ENCODE measurements at regions of chr6 and their contacts with region 1.

Region 1: DNA sequence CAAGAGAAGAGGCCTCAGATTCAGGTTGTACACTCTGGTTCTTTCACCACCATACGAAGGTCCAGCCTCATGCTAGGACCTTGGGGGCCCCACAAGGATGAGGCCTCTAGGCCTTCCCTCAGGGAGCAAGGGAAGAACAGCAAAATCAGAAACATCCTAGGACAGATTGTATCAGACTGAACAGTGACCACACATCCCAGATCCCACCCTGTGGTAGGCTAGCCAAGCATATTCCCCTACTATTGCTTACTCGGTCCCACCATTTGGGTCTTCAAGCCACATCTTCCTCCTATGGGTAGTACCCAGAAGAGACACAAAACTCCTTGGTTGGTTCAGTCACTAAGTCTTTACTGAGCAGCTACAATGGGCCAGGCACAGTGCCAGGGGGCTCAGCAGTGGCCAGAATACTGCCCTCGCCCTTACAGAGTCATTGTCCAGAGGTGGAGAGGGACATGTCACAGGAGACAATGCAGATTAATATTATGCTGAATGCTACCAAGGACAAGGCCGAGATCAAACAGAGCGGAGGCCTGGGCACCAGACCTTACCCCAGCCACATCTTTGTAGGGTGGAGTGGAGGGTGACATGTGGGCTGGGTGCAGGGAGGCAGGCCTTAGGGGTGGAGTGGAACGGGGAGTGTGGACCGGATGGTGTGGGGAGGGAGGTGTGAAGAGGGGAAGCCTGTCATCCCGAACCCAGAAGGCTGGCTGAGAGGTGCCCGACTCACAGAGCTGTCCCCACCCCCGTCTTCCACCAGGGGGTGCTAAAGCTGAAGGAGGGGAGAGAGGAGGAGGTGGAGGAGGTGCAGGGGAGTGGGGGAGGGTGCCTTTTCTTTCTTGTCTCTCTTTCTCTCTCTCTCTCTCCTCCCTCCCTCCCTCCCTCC is 6.8 kb upstream of the MAPK13 start:
- DNase-seq: peak; percentile 64
- H3K4me3 ChIP-seq: no peak overlapping the region
- H3K27ac ChIP-seq: no peak overlapping the region
- H3K4me1 ChIP-seq: peaks cover 15% of the 10 kb centered on the region
- H3K27me3 ChIP-seq: no peaks in the 10 kb centered on the region
- CTCF ChIP-seq: peak; percentile 68 to 87

Region 2: DNA sequence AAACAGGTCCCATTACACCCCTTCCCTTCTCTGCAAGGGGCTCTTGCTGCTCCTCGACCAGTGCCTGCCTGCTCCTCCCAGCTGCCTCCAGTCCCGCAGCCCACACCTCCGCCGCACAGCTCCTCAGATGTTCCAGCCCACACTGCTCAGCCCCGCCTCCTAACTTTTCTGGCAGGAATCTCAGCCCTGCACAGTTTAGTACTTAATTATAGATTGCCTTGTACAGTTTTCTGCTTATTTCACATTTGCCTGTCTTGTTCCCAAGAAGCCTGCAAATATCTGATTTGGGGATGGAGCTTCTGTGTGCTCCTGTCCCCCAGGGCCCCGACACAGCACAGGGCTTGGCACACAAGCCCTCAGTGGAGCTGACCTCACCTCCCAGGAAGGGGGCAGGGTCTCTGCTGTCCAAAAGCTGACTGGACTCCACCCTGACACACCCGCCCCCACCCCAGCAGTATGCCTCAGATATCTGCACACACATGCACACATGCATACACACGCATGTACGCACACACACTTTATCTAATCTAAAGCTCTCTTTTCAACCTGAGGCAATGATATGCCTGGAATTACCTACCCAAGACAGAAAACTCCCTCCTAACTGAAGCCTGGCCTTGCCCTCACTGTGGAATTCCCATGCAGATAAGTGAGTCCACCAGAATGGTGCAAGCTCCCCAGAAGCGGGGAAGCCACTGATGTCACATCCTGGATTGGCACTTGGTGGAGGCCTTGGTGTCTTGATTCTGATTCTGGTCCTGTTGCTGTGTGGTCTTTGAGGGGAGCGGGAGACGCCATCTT is 145.2 kb after region 1 on chr6:
- CTCF ChIA-PET with region 1: no interaction called
- dilution Hi-C with region 1: no loop called
- in situ Hi-C with region 1: no loop called
- intact Hi-C with region 1: no loop called
- DNase-seq: no peak
- H3K4me3 ChIP-seq: no peak overlapping the region
- H3K27ac ChIP-seq: no peak overlapping the region
- H3K4me1 ChIP-seq: peaks cover 17% of the 10 kb centered on the region
- H3K27me3 ChIP-seq: no peaks in the 10 kb centered on the region
- CTCF ChIP-seq: no peak

Region 3: GRCh38 chr6:36340618-36341454 is 217.3 kb after region 1 on chr6:
- CTCF ChIA-PET with region 1: interaction called, 12 read pairs
- dilution Hi-C with region 1: no loop called
- in situ Hi-C with region 1: no loop called
- intact Hi-C with region 1: no loop called
- DNase-seq: peak; percentile 24
- H3K4me3 ChIP-seq: no peak overlapping the region
- H3K27ac ChIP-seq: no peak overlapping the region
- H3K4me1 ChIP-seq: peaks cover 3% of the 10 kb centered on the region
- H3K27me3 ChIP-seq: peaks cover 4% of the 10 kb centered on the region
- CTCF ChIP-seq: peak; percentile 92 to 96